Activated CD4-positive, alpha-beta memory T cell treated with anti-CD3 and anti-CD28 coated beads for 36 hours (primary cell): ENCODE measurements at regions of chr14 and their contacts with region 1.

Region 1: DNA sequence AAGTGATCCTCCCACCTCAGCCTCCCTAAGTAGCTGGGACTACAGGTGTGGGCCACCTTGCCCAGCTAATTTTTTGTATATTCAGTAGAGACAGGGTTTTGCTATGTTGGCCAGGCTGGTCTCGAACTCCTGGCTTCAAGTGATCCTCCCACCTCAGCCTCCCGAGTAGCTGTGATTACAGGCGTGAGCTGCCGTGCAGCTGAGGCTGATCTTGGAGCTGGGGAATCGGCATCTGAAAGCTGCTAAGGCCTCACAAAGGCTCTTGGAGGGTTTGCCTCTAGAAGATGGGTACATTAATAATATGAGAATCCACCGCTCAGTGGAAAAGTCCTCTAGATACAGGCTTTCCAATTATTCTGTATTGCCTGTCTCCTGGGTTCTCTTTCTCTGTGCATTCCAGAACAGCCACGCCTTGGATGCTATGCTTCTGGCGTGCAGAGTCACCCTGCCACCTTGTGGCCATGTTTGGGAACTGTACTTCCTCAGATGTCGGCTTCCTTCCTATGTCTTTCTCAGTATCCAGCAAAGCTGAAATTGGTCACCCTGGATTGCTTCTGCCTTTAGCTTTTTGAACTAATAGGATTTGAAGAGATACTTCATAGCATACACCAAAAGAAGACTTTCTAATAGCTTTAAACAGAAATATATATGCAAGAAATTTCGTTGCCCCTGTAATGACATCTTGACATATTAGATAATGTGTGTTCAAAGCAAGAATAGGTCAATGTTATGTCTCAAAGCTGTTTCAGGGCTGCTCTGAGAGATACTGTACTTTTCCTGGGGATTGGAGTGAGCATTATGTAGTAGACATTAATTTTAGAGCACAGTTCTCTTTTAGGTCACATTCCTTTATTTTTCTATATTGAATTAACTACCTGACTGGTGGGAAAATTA is 75.4 kb downstream of the SNAPC1 start:
- DNase-seq: peak; percentile 85
- H3K4me3 Mint-ChIP-seq: no peak overlapping the region
- H3K27ac Mint-ChIP-seq: no peak overlapping the region
- H3K4me1 Mint-ChIP-seq: peaks cover 4% of the 10 kb centered on the region
- H3K27me3 Mint-ChIP-seq: peaks cover 2% of the 10 kb centered on the region

Region 2: DNA sequence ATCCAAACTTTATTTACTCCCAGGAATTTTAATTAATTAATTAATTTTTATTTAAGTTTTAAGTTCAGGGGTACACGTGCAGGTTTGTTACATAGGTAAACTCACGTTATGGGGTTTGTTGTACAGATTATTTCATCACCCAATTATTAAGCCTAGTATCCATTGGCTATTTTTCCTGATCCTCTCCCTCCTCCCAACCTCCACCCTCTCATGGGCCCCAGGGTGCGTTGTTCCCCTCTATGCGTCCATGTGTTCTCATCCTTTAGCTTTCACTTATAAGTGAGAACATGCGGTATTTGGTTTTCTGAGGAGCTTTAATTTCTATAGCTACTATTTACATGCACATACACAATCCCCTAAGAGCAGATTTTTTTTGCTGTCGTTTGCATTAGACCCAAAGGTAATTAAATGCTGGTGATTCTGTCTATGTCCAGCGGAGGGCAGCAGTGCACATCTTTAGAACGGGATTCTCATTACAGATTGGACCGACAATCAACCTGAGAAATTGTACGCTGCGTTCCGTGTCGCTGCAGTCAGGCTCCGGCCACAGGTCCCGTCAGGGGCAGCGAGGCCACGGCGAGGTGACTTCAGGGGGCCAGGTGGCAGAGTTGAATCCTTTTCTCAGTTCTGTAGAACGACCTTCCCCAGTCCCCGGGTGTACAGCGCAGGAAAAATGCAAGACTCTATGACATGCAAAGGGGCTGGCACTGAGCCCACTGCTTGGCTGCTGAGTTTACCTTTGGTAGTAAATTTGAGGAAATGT is 568.1 kb before region 1 on chr14:
- CTCF ChIA-PET with region 1: interaction called, 7 read pairs
- POLR2A ChIA-PET with region 1: no interaction called
- intact Hi-C with region 1: loop called (anchors 1 kb)
- DNase-seq: peak; percentile 86
- H3K4me3 Mint-ChIP-seq: peak overlapping the region; percentile 60
- H3K27ac Mint-ChIP-seq: no peak overlapping the region
- H3K4me1 Mint-ChIP-seq: no peaks in the 10 kb centered on the region
- H3K27me3 Mint-ChIP-seq: peaks cover 28% of the 10 kb centered on the region

Region 3: DNA sequence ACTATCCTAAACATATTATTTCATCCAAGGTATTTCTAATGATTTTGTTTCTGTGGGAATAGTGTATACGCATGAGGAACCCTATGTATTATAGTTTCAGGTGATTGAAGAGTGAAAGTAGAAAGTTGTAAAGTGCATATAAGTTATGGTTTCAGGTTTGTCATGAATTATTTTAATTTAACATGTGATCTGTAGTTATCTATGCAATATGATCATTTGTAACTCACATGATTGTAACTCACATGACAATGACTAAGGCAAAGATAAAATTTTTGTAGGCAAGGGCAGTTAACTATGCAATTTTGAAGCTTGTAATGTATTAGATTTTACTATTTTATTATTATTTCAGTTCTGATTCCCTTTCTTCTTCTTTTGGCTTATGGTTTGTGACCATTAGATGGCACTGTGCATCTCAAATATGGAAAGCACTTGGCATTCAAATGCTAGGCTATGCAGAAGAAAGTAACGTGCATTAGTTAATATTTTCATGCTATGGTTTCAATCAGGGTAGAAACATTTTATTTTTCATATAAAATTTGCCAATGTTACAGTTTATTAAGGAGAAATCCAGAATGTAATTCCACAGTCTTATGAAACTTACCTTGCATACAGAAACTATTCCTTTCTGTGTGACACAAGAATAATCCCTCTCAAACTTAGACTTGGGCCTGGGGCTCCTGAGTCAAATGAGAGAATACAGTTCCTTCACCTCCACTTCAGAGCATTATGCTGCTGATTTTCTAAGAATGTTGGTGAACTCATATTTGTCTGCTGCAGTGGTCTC is 540.7 kb before region 1 on chr14:
- CTCF ChIA-PET with region 1: interaction called, 8 read pairs
- POLR2A ChIA-PET with region 1: no interaction called
- intact Hi-C with region 1: loop called (anchors 1 kb)
- DNase-seq: no peak
- H3K4me3 Mint-ChIP-seq: no peak overlapping the region
- H3K27ac Mint-ChIP-seq: no peak overlapping the region
- H3K4me1 Mint-ChIP-seq: peaks cover 44% of the 10 kb centered on the region
- H3K27me3 Mint-ChIP-seq: no peaks in the 10 kb centered on the region

Region 4: DNA sequence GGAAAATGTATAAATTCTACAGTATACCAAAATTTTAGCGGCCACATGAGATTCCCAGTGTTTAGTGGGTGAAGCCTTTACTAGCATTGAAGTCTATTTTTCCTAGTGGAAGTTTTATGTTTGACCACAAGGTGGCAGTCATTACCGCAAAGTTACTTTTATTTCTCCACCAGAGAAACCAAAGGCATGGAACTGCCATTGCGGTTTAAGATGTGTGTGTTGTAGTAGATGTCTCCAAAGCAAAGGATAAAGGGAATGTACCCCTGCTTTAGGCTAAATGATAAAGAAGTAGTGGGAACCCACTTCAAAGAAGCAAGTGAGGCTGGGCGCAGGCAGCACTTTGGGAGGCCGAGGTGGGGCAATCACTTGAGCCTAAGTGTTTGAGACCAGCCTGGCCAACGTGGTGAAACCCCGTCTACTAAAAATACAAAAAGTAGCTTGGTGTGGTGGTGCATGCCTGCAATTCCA is 375.7 kb before region 1 on chr14:
- CTCF ChIA-PET with region 1: interaction called, 70 read pairs
- POLR2A ChIA-PET with region 1: interaction called, 4 read pairs
- intact Hi-C with region 1: loop called (anchors 1 kb)
- DNase-seq: no peak
- H3K4me3 Mint-ChIP-seq: no peak overlapping the region
- H3K27ac Mint-ChIP-seq: peak overlapping the region; percentile 90
- H3K4me1 Mint-ChIP-seq: peaks cover 63% of the 10 kb centered on the region
- H3K27me3 Mint-ChIP-seq: no peaks in the 10 kb centered on the region

Region 5: GRCh38 chr14:61812761-61813606 is 24.6 kb before region 1 on chr14:
- CTCF ChIA-PET with region 1: interaction called, 11 read pairs
- POLR2A ChIA-PET with region 1: no interaction called
- intact Hi-C with region 1: no loop called
- DNase-seq: no peak
- H3K4me3 Mint-ChIP-seq: peak overlapping the region; percentile 71
- H3K27ac Mint-ChIP-seq: no peak overlapping the region
- H3K4me1 Mint-ChIP-seq: peaks cover 9% of the 10 kb centered on the region
- H3K27me3 Mint-ChIP-seq: peaks cover 46% of the 10 kb centered on the region